SK-N-SH (cell line): ENCODE measurements at regions of chr21 and their contacts with region 1.

Region 1: DNA sequence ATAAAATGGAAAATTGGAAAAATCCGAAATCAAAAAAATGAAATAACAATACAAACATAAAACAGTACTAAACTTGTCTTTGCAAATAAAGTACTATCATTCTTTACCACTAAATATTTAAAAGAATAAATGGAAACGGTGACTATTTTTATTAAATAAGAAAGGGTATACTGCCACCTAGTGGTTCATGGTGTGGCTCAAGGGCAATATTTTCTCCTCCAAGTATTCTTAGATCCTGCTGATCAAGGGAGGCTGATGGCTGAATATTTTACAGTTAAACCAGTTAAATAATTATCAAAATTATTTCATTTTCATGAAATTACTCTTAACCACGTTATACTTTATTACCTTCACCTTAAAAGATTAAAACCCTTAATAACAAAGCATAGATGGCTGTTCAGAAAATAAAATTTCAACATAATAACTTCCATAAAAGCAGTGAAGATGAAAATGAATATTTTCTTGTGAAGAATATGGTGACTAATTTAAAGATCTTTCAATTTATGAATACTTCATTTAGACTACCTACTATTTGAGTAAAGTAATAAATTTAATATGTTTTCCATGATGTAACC is 1793.9 kb downstream of the NCAM2 start:
- DNase-seq: peak; percentile 60
- H3K4me3 ChIP-seq: no peak overlapping the region; a peak in 1 of 4 replicates
- H3K27ac ChIP-seq: no peak overlapping the region
- H3K4me1 ChIP-seq: peaks cover 0 to 5% of the 10 kb centered on the region in 2 experiments; a peak in 1 of 4 replicates
- H3K27me3 ChIP-seq: no peaks in the 10 kb centered on the region
- CTCF ChIP-seq: peak; percentile 89
- EP300 ChIP-seq: no peak
- RAD21 ChIP-seq: peak; percentile 82

Region 2: DNA sequence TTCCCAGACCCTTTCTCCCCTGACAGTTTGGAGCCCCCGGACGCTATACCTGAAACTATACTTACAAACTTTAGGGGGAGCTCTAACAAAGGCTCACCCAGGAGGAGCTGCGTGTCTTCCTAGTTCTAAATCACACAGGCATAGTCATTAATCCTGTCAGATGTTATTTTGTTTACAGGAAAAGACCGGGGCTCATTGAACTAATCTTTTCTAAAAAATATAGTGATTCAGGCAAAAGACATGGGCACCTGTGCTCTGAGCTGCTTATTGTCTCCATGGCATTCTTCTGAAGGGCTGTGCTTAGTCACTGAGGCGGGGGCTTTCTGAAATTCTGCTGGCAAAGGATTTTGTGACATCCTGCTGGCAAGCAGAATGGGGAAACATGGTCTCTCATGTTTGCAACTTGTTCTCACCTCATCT is 216.9 kb before region 1 on chr21:
- CTCF ChIA-PET with region 1: interaction called, 12 read pairs
- POLR2A ChIA-PET with region 1: no interaction called
- DNase-seq: peak; percentile 71
- H3K4me3 ChIP-seq: 0 out of 4 replicates have a peak overlapping the region, but pooled peaks of 1 of the 2 experiments have one; percentile 19
- H3K27ac ChIP-seq: no peak overlapping the region; a peak in 1 of 4 replicates
- H3K4me1 ChIP-seq: no peaks in the 10 kb centered on the region; a peak in 1 of 4 replicates
- H3K27me3 ChIP-seq: no peaks in the 10 kb centered on the region
- CTCF ChIP-seq: peak; percentile 36
- EP300 ChIP-seq: no peak
- RAD21 ChIP-seq: peak; percentile 72

Region 3: GRCh38 chr21:22763442-22763841 is 28.6 kb before region 1 on chr21:
- CTCF ChIA-PET with region 1: interaction called, 13 read pairs
- POLR2A ChIA-PET with region 1: no interaction called
- DNase-seq: no peak
- H3K4me3 ChIP-seq: no peak overlapping the region
- H3K27ac ChIP-seq: no peak overlapping the region; a peak in 1 of 4 replicates
- H3K4me1 ChIP-seq: no peaks in the 10 kb centered on the region
- H3K27me3 ChIP-seq: no peaks in the 10 kb centered on the region
- CTCF ChIP-seq: no peak
- EP300 ChIP-seq: no peak
- RAD21 ChIP-seq: no peak